Activated naive CD4-positive, alpha-beta T cell treated with anti-CD3 and anti-CD28 coated beads for 36 hours (primary cell): ENCODE measurements at regions of chr17 and their contacts with region 1.

Region 1: DNA sequence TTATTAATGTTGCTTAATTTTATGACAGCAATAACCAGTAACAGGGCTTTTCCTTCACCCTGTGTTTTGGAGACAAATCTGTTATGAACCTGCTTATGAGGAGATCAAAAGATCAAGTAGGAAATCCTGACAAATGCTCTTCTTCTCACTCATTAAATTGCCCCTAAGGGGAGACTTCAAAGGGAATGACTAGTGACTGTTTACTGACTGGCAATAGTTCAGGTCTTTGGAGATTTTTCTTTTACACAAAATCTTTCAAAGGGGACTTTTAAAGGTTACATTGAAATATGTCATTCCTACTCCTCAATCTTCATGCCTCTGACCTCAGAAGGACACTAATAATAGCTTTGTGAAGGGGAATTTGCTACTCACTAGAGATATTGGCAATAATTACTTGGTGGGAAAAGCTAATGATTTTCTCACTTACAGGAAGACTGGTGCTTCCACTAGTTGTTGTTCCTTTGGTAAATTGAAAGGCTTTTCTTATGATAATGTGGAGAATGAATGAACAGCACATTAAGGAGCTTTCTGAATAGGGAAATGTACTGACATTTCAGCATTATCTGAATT is 292.9 kb upstream of the CA10 start:
- DNase-seq: no peak
- H3K4me3 Mint-ChIP-seq: no peak overlapping the region
- H3K27ac Mint-ChIP-seq: no peak overlapping the region
- H3K4me1 Mint-ChIP-seq: no peaks in the 10 kb centered on the region
- H3K27me3 Mint-ChIP-seq: peaks cover 2% of the 10 kb centered on the region

Region 2: DNA sequence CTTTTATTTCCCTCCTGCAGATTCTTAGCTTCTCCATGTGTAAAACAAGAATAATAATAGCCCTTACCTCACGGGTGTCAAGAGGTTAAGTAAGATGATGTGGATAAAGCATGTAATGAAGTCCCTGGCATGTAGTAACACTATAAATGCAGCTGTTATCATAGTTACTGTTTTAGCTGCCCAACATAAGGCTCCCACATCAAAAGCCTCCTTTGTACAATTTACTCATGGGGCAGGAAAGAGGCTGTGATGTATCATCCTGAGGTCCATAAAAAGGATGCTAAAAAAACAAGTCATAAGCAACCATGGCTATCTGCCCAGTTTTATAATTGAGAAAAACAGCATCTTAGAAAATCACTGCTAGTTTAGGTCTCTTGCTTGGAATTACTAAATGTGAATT is 632.6 kb before region 1 on chr17:
- CTCF ChIA-PET with region 1: no interaction called
- intact Hi-C with region 1: loop called (anchors 5 kb)
- DNase-seq: no peak
- H3K4me3 Mint-ChIP-seq: no peak overlapping the region
- H3K27ac Mint-ChIP-seq: no peak overlapping the region
- H3K4me1 Mint-ChIP-seq: peaks cover 3% of the 10 kb centered on the region
- H3K27me3 Mint-ChIP-seq: peaks cover 6% of the 10 kb centered on the region